Activated CD8-positive, alpha-beta T cell treated with anti-CD3 and anti-CD28 coated beads for 36 hours (primary cell): ENCODE measurements at regions of chr2 and their contacts with region 1.

Region 1: GRCh38 chr2:216498418-216499413 is at the start of gene RPL37A:
- DNase-seq: peak; percentile 94
- ATAC-seq: peak; percentile 97
- H3K4me3 Mint-ChIP-seq: peak within 1 kb of the TSS; percentile 85
- H3K27ac Mint-ChIP-seq: peak within 1 kb of the TSS; percentile 95
- H3K4me1 Mint-ChIP-seq: peaks cover 46% of the 10 kb centered on the region
- H3K27me3 Mint-ChIP-seq: no peaks in the 10 kb centered on the region
- CTCF ChIP-seq: no peak
- total RNA-seq, gene RPL37A: 4,110 to 4,316 TPM

Region 2: DNA sequence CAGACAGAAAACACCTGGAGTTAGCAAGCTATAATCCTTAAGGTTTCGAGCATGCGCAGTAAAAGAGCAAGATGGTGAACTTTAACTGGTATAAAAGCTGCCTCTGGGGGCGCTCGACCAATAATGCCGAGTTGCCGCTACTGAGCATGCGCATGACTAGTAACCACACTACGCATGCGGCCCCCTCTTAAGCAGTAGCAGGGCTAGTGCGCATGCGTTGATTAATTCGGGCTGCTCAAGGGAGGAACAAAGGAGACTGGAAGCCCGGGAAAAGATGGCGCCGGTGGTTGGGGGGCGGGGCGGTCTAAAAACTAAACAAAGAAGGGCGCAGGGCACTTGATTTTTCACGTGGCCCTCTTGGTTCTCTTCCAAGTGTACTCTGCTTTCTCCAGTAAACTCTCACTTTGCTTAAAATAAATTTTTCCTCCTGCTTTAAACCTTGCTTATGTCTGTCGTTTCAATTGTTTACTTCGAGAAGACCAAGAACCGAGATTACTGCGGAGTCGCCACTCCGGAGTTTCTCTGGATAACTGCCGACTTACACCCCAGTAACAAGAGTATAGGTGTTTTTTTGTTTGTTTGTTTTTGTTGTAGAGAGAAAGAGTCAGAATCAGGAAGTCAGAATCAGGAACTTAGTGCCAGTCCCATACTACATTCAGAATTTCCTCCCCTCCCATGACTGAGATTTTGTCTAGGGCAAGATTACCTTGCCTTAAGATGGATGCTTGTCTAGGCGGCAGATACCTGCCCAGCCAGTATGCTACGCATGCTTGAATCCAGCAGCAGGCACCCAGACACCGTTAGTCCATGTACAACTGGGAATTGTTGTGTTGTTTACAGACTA is 383.8 kb before region 1 on chr2:
- CTCF ChIA-PET with region 1: interaction called, 4 read pairs
- POLR2A ChIA-PET with region 1: interaction called, 3 read pairs
- intact Hi-C with region 1: loop called (anchors 10 kb)
- DNase-seq: peak; percentile 99
- ATAC-seq: peak; percentile 85
- H3K4me3 Mint-ChIP-seq: peak overlapping the region; percentile 96
- H3K27ac Mint-ChIP-seq: peak overlapping the region; percentile 98
- H3K4me1 Mint-ChIP-seq: peaks cover 90% of the 10 kb centered on the region
- H3K27me3 Mint-ChIP-seq: no peaks in the 10 kb centered on the region
- CTCF ChIP-seq: peak; percentile 88

Region 3: GRCh38 chr2:216412022-216412999 is 86.4 kb before region 1 on chr2 and contains the start of gene SMARCAL1:
- CTCF ChIA-PET with region 1: no interaction called
- POLR2A ChIA-PET with region 1: interaction called, 5 read pairs
- intact Hi-C with region 1: loop called (anchors 5 kb)
- DNase-seq: peak; percentile 100
- ATAC-seq: peak; percentile 94
- H3K4me3 Mint-ChIP-seq: peak within 1 kb of the TSS; percentile 98
- H3K27ac Mint-ChIP-seq: peak within 1 kb of the TSS; percentile 96
- H3K4me1 Mint-ChIP-seq: peaks cover 9% of the 10 kb centered on the region
- H3K27me3 Mint-ChIP-seq: no peaks in the 10 kb centered on the region
- CTCF ChIP-seq: no peak
- total RNA-seq, gene SMARCAL1: 22.3 to 24.7 TPM

Region 4: GRCh38 chr2:216478151-216478550 is 20.6 kb before region 1 on chr2:
- CTCF ChIA-PET with region 1: no interaction called
- POLR2A ChIA-PET with region 1: interaction called, 13 read pairs
- intact Hi-C with region 1: no loop called
- DNase-seq: peak; percentile 62
- ATAC-seq: peak; percentile 92
- H3K4me3 Mint-ChIP-seq: no peak overlapping the region
- H3K27ac Mint-ChIP-seq: no peak overlapping the region
- H3K4me1 Mint-ChIP-seq: peaks cover 28% of the 10 kb centered on the region
- H3K27me3 Mint-ChIP-seq: no peaks in the 10 kb centered on the region
- CTCF ChIP-seq: no peak